Psoas muscle (tissue), 8 donors: ENCODE measurements at regions of chr13 and their contacts with region 1.

Region 1: DNA sequence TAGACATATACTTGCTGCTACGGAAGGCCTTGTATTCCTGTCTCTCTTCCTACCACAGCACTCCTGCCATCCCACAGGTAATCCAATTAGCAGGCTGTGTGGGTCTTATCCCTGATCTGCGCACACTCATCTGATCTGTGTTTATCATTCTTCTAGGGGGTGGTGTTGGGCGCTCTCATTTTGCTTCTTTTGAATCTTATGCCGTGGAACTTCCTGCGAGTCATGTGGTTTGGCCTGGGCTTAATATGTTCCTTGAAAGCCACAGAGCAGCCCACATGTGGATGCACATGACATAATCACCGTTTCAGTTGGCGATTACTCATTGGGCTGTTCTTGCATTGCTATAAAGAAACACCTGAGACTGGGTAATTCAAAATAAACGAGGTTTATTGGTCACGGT is 7.5 kb downstream of the RASA3 start:
- DNase-seq: peak in 1 of 2 donors; percentile 25
- ATAC-seq: peak; percentile 25 to 57 (median 39)
- H3K4me3 ChIP-seq: no peak overlapping the region
- H3K27ac ChIP-seq: peak overlapping the region; percentile 56
- H3K4me1 ChIP-seq: peaks cover 77% of the 10 kb centered on the region
- H3K27me3 ChIP-seq: no peaks in the 10 kb centered on the region
- CTCF ChIP-seq: no peak

Region 2: DNA sequence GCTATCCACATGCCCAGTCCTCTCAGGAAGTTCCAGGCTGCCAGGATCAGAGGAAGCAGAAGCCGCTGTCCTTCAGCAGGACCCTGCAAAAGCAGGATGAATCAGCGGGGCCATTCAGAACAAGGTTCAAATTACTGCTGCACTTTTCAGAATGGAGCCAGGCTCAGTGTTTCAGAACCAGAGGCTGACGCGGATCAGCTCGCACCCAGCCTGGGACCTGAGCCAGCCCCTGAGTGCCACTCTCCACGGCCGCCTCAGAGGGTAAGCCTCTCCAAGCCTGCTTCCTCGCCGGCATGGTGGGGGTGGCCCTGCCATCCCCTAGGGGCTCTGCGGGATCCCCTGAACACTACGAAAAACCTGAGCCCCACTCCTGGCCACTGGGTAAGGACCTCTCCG is 17.2 kb before region 1 on chr13:
- intact Hi-C with region 1: loop called in 1 of 2 experiments (anchors 2 kb)
- DNase-seq: peak; percentile 75 to 87
- ATAC-seq: peak; percentile 80 to 85 (median 84)
- H3K4me3 ChIP-seq: peak overlapping the region; percentile 18
- H3K27ac ChIP-seq: peak overlapping the region; percentile 92
- H3K4me1 ChIP-seq: peaks cover 64% of the 10 kb centered on the region
- H3K27me3 ChIP-seq: no peaks in the 10 kb centered on the region
- CTCF ChIP-seq: no peak